CD14-positive monocyte (primary cell): ENCODE measurements at regions of chr12 and their contacts with region 1.

Region 1: GRCh38 chr12:108457006-108457733 is 57.9 kb upstream of the FICD start:
- DNase-seq: peak; percentile 30 to 54 (median 52)
- H3K4me3 ChIP-seq: no peak overlapping the region
- H3K4me3 Mint-ChIP-seq: no peak overlapping the region
- H3K27ac ChIP-seq: no peak overlapping the region
- H3K27ac Mint-ChIP-seq: no peak overlapping the region
- H3K4me1 ChIP-seq: peaks cover 6 to 12% of the 10 kb centered on the region in 2 donors
- H3K4me1 Mint-ChIP-seq: peaks cover 11% of the 10 kb centered on the region
- H3K27me3 ChIP-seq: peaks cover 5 to 9% of the 10 kb centered on the region in 2 donors
- H3K27me3 Mint-ChIP-seq: peaks cover 9 to 16% (median 10%) of the 10 kb centered on the region in 3 donors
- CTCF ChIP-seq: peak; percentile 80

Region 2: GRCh38 chr12:108234158-108234557 is 223.0 kb before region 1 on chr12:
- intact Hi-C with region 1: loop called (anchors 5 to 10 kb)
- DNase-seq: peak; percentile 18 to 53 (median 30)
- H3K4me3 ChIP-seq: no peak overlapping the region
- H3K4me3 Mint-ChIP-seq: no peak overlapping the region
- H3K27ac ChIP-seq: no peak overlapping the region
- H3K27ac Mint-ChIP-seq: no peak overlapping the region
- H3K4me1 ChIP-seq: no peaks in the 10 kb centered on the region
- H3K4me1 Mint-ChIP-seq: no peaks in the 10 kb centered on the region
- H3K27me3 ChIP-seq: peaks cover 4 to 9% of the 10 kb centered on the region in 2 donors
- H3K27me3 Mint-ChIP-seq: peaks cover 11 to 25% (median 17%) of the 10 kb centered on the region in 3 donors
- CTCF ChIP-seq: peak; percentile 49